PC-3 (cell line): ENCODE measurements at regions of chr21 and their contacts with region 1.

Region 1: GRCh38 chr21:28522014-28522799 is 470.5 kb downstream of the LTN1 start:
- DNase-seq: peak; percentile 54
- ATAC-seq: peak; percentile 75
- H3K4me3 ChIP-seq: no peak overlapping the region
- H3K27ac ChIP-seq: peak overlapping the region; percentile 38
- H3K4me1 ChIP-seq: peaks cover 18% of the 10 kb centered on the region
- H3K27me3 ChIP-seq: no peaks in the 10 kb centered on the region
- CTCF ChIP-seq: peak; percentile 71; the same call in 1 of the 2 replicates

Region 2: GRCh38 chr21:28357743-28358142 is 164.5 kb before region 1 on chr21:
- CTCF ChIA-PET with region 1: no interaction called
- POLR2A ChIA-PET with region 1: no interaction called
- intact Hi-C with region 1: loop called (anchors 5 kb)
- DNase-seq: no peak
- ATAC-seq: no peak
- H3K4me3 ChIP-seq: no peak overlapping the region
- H3K27ac ChIP-seq: no peak overlapping the region
- H3K4me1 ChIP-seq: no peaks in the 10 kb centered on the region
- H3K27me3 ChIP-seq: no peaks in the 10 kb centered on the region
- CTCF ChIP-seq: no peak

Region 3: DNA sequence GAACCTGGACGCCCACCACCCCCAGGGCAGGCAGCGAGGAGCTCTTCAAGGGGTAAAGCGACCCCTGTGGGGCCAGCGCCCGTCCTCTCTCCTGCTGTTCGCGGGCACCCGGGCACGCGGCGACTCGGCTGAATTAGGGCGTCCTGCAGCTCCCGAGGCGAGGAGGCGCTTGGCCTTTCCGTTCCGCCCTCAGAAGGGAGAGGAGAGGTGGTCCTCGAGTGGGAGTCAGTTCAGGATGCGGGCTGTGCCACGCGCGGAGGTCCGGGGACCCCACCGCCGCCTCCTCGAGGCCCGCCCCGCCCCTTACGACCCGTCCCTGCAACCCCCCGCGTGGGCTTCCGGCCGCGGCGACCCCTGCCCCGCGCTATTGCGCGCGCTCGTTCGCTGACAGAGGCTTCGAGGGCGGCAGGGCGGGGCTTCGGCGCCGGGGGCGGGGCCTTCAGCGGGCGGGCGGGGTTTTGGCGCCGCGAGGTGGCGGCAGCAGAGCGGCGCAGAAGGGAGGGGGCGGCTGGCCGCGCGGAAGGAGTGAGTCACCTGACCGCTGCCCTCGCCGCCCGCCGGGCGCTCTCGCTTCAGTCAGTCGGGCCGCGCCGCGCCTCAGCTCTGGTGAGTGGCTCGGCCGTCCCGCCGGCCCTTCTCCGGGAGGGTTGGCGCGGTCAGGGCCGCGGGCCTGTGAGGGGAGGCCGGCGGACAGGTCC is 776.3 kb after region 1 on chr21 and contains the start of gene BACH1:
- CTCF ChIA-PET with region 1: no interaction called
- POLR2A ChIA-PET with region 1: no interaction called
- intact Hi-C with region 1: no loop called
- DNase-seq: peak; percentile 92
- ATAC-seq: peak; percentile 81
- H3K4me3 ChIP-seq: peak within 1 kb of the TSS; percentile 85
- H3K27ac ChIP-seq: peak within 1 kb of the TSS; percentile 51
- H3K4me1 ChIP-seq: peaks cover 40% of the 10 kb centered on the region
- H3K27me3 ChIP-seq: no peaks in the 10 kb centered on the region
- CTCF ChIP-seq: peak; percentile 13; the same call in 1 of the 2 replicates
- total RNA-seq, gene BACH1: 17.2 and 21.1 TPM in 2 replicates